CD8-positive, alpha-beta memory T cell (primary cell): ENCODE measurements at regions of chr15 and their contacts with region 1.

Region 1: GRCh38 chr15:38699633-38700230 is 135.1 kb upstream of the RASGRP1 start:
- DNase-seq: peak; percentile 39 to 76 (median 59)
- H3K4me3 ChIP-seq: no peak overlapping the region
- H3K4me3 Mint-ChIP-seq: peak overlapping the region in 5 of 7 donors; percentile 3 to 37 (median 30)
- H3K27ac ChIP-seq: no peak overlapping the region
- H3K27ac Mint-ChIP-seq: peak overlapping the region; percentile 64 to 91 (median 80)
- H3K4me1 ChIP-seq: peaks cover 52% of the 10 kb centered on the region
- H3K4me1 Mint-ChIP-seq: peaks cover 53 to 57% (median 56%) of the 10 kb centered on the region in 3 donors
- H3K27me3 ChIP-seq: no peaks in the 10 kb centered on the region
- H3K27me3 Mint-ChIP-seq: peaks cover 0 to 3% of the 10 kb centered on the region in 2 donors

Region 2: GRCh38 chr15:38453971-38454695 is 245.6 kb before region 1 on chr15 and contains the start of gene FAM98B:
- CTCF ChIA-PET with region 1: interaction called, 20 read pairs
- POLR2A ChIA-PET with region 1: interaction called, 4 read pairs
- DNase-seq: peak; percentile 68 to 87 (median 80)
- H3K4me3 ChIP-seq: peak within 1 kb of the TSS; percentile 66
- H3K4me3 Mint-ChIP-seq: peak within 1 kb of the TSS; percentile 94 to 99 (median 97)
- H3K27ac ChIP-seq: peak within 1 kb of the TSS; percentile 89
- H3K27ac Mint-ChIP-seq: peak within 1 kb of the TSS; percentile 91 to 98 (median 96)
- H3K4me1 ChIP-seq: peaks cover 17% of the 10 kb centered on the region
- H3K4me1 Mint-ChIP-seq: peaks cover 33 to 45% (median 36%) of the 10 kb centered on the region in 3 donors
- H3K27me3 ChIP-seq: no peaks in the 10 kb centered on the region
- H3K27me3 Mint-ChIP-seq: peaks cover 0 to 3% of the 10 kb centered on the region in 2 donors
- total RNA-seq, gene FAM98B: 56.7 to 60.9 TPM

Region 3: GRCh38 chr15:38504680-38505467 is 194.9 kb before region 1 on chr15:
- CTCF ChIA-PET with region 1: interaction called, 12 read pairs
- POLR2A ChIA-PET with region 1: no interaction called
- DNase-seq: no peak
- H3K4me3 ChIP-seq: no peak overlapping the region
- H3K4me3 Mint-ChIP-seq: no peak overlapping the region
- H3K27ac ChIP-seq: no peak overlapping the region
- H3K27ac Mint-ChIP-seq: peak overlapping the region; percentile 26 to 85 (median 70)
- H3K4me1 ChIP-seq: no peaks in the 10 kb centered on the region
- H3K4me1 Mint-ChIP-seq: peaks cover 6 to 9% (median 9%) of the 10 kb centered on the region in 3 donors
- H3K27me3 ChIP-seq: no peaks in the 10 kb centered on the region
- H3K27me3 Mint-ChIP-seq: no peaks in the 10 kb centered on the region

Region 4: GRCh38 chr15:38647683-38648082 is 52.0 kb before region 1 on chr15:
- CTCF ChIA-PET with region 1: interaction called, 14 read pairs
- POLR2A ChIA-PET with region 1: interaction called, 3 read pairs
- DNase-seq: no peak
- H3K4me3 ChIP-seq: no peak overlapping the region
- H3K4me3 Mint-ChIP-seq: peak overlapping the region in 1 of 7 donors; percentile 12
- H3K27ac ChIP-seq: no peak overlapping the region
- H3K27ac Mint-ChIP-seq: peak overlapping the region; percentile 50 to 87 (median 74)
- H3K4me1 ChIP-seq: peaks cover 80% of the 10 kb centered on the region
- H3K4me1 Mint-ChIP-seq: peaks cover 74 to 86% (median 84%) of the 10 kb centered on the region in 3 donors
- H3K27me3 ChIP-seq: no peaks in the 10 kb centered on the region
- H3K27me3 Mint-ChIP-seq: no peaks in the 10 kb centered on the region